ENCODE measurements at regions of chr11 and their contacts with region 1.

Region 1: DNA sequence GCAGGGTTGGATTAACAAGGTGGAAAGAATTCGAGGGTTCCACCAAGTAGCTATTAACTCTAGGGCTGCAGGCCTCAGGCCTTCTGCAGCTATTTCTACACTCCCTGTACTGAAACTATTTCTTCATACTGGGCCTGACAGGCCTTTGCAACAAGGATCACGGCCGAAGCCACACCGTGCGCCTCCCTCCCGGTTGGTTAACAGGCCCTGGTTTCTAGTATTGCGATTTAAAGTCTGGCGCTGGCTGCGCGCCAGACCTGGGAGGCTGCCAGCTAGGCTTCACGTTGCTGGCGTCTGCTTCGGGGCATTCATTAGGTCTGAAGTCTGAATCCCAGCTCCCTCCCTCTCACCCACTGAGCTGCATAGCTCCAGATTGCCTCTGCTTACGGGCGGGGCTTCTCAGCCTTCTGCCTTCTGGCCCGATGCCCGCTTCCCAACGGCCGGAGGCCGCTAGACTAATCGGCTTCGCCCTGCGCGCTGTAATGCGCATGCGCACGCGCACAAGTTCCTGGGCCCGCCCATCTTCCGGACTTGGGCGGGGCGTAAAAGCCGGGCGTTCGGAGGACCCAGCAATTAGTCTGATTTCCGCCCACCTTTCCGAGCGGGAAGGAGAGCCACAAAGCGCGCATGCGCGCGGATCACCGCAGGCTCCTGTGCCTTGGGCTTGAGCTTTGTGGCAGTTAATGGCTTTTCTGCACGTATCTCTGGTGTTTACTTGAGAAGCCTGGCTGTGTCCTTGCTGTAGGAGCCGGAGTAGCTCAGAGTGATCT is 1.6 kb downstream of the LDHA start:
- DNase-seq: peak; percentile 97
- ATAC-seq: peak; percentile 86
- H3K4me3 ChIP-seq: peak overlapping the region; percentile 91 to 100
- H3K27ac ChIP-seq: peak overlapping the region; percentile 98
- H3K4me1 ChIP-seq: peaks cover 11 to 25% of the 10 kb centered on the region in 2 experiments
- H3K27me3 ChIP-seq: no peaks in the 10 kb centered on the region
- CTCF ChIP-seq: no peak
- POLR2A ChIP-seq: peak; percentile 50
- RAD21 ChIP-seq: no peak

Region 2: DNA sequence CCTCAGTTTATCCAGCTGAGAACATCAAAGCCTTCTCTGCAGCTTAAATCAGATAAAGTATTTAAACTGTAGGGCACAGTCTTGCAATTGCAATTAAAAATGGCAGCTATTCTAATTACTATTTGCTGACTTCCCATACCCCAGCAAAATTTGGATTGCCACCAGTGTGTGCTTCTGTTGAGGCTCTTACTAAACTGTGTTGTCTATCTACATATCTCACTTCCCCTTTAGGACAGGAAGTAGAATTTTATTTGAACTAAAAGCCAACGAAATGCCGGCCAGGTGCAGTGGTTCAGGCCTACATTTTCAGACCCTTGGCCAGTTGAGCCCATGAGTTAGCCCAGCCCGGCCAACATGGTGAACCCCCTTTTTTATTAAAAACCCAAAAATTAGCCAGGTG is 166.4 kb before region 1 on chr11:
- CTCF ChIA-PET with region 1: no interaction called
- POLR2A ChIA-PET with region 1: no interaction called
- RAD21 ChIA-PET with region 1: no interaction called
- intact Hi-C with region 1: no loop called
- DNase-seq: no peak
- ATAC-seq: no peak
- H3K4me3 ChIP-seq: no peak overlapping the region
- H3K27ac ChIP-seq: no peak overlapping the region
- H3K4me1 ChIP-seq: no peaks in the 10 kb centered on the region
- H3K27me3 ChIP-seq: no peaks in the 10 kb centered on the region
- CTCF ChIP-seq: no peak
- POLR2A ChIP-seq: no peak
- RAD21 ChIP-seq: no peak

Region 3: GRCh38 chr11:18265949-18266348 is 130.0 kb before region 1 on chr11 and contains the start of gene SAA1:
- CTCF ChIA-PET with region 1: no interaction called
- POLR2A ChIA-PET with region 1: no interaction called
- RAD21 ChIA-PET with region 1: no interaction called
- intact Hi-C with region 1: no loop called
- DNase-seq: no peak
- ATAC-seq: no peak
- H3K4me3 ChIP-seq: no peak within 1 kb of the TSS
- H3K27ac ChIP-seq: no peak within 1 kb of the TSS
- H3K4me1 ChIP-seq: no peaks in the 10 kb centered on the region
- H3K27me3 ChIP-seq: no peaks in the 10 kb centered on the region
- CTCF ChIP-seq: no peak
- POLR2A ChIP-seq: no peak
- RAD21 ChIP-seq: no peak
- total RNA-seq, gene SAA1: 8.6 TPM

Region 4: DNA sequence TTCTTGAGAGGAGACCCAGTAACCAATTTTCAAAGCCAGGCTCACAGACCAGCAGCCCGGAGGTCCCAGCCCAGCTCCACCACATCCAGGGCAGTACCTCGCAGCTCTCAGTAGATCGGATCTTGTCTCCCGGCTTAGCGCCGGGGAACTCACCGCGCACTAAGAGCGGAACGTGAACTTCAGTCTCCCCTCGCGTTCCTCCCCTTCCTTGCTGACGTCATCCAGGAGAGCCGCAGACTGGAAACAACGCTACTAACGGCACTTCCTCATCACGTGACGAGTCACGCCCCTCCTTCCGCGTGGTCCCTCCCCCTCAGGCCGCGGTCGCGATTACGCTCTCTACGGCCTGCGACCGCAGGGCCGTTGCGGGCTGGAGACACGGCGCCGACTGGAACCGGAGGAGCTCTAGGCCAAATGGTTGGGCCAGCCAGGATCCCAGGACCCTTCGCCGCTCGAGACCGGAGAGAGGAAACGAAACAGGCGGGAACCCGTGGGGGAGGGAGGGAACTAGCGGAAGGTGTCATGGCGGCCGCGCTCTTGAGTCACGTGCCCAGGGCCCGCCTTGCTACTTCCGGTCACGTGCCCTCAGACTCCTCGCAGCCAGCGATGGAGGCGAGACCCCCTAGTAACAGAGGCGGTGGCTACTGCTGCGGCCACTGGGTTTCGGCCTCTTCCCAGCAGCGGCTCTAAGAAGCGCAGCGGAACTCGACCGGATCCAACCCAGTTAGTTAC is 73.8 kb before region 1 on chr11 and contains the starts of genes GTF2H1 and HPS5:
- CTCF ChIA-PET with region 1: no interaction called
- POLR2A ChIA-PET with region 1: interaction called, 12 read pairs
- RAD21 ChIA-PET with region 1: no interaction called
- intact Hi-C with region 1: loop called (anchors 2 kb)
- DNase-seq: peak; percentile 98
- ATAC-seq: peak; percentile 92
- H3K4me3 ChIP-seq: peak within 1 kb of the TSS; percentile 60 to 82
- H3K27ac ChIP-seq: peak within 1 kb of the TSS; percentile 69
- H3K4me1 ChIP-seq: peaks cover 9 to 21% of the 10 kb centered on the region in 2 experiments; a peak in 3 of 4 replicates
- H3K27me3 ChIP-seq: no peaks in the 10 kb centered on the region
- CTCF ChIP-seq: no peak
- POLR2A ChIP-seq: peak; percentile 90
- RAD21 ChIP-seq: peak; percentile 23; the same call in 1 of the 2 replicates
- total RNA-seq, gene GTF2H1: 37.3 TPM
- total RNA-seq, gene HPS5: 19.6 TPM

Region 5: GRCh38 chr11:18383388-18384156 is 12.3 kb before region 1 on chr11:
- CTCF ChIA-PET with region 1: interaction called, 4 read pairs
- POLR2A ChIA-PET with region 1: interaction called, 88 read pairs
- RAD21 ChIA-PET with region 1: interaction called in 1 of 2 experiments, 6 read pairs
- intact Hi-C with region 1: no loop called
- DNase-seq: peak; percentile 84
- ATAC-seq: peak; percentile 86
- H3K4me3 ChIP-seq: peak overlapping the region in 1 of 2 experiments; percentile 31; a peak in 2 of 4 replicates
- H3K27ac ChIP-seq: peak overlapping the region; percentile 94
- H3K4me1 ChIP-seq: peaks cover 23 to 24% of the 10 kb centered on the region in 2 experiments
- H3K27me3 ChIP-seq: no peaks in the 10 kb centered on the region
- CTCF ChIP-seq: no peak
- POLR2A ChIP-seq: no peak
- RAD21 ChIP-seq: no peak

Region 6: DNA sequence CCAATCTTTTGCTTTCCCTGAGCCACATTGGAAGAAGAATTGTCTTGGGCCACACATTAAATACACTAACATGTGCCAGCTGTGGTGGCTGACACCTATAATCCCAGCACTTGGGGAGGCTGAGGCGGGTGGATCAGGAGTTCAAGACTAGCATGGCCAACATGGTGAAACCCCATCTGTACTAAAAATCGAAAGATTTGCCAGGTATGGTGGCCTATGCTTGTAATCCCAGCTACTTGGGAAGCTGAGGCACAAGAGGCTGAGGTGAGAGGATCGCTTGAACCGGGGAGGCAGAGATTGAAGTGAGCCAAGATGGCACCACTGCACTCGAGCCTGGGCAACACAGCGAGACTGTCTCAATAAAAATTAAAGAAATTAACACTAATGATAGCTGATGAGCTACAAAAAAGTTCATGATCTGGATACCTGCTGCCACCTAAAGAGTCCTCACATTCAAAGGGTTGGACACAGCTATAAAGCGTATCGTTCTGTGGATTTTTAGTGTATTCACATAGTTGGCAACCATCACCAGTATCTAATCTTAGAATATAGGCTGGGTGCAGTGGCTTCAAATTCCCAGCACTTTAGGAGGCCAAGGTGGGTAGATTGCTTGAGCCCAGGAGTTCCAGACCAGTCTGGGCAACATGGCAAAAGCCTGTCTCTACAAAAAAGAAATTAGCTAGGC is 12.8 kb after region 1 on chr11:
- CTCF ChIA-PET with region 1: interaction called, 10 read pairs
- POLR2A ChIA-PET with region 1: interaction called, 37 read pairs
- RAD21 ChIA-PET with region 1: no interaction called
- intact Hi-C with region 1: no loop called
- DNase-seq: no peak
- ATAC-seq: no peak
- H3K4me3 ChIP-seq: no peak overlapping the region
- H3K27ac ChIP-seq: 0 out of 2 replicates have a peak overlapping the region, but pooled peaks have one; percentile 10
- H3K4me1 ChIP-seq: peaks cover 2 to 22% of the 10 kb centered on the region in 2 experiments; a peak in 2 of 4 replicates
- H3K27me3 ChIP-seq: no peaks in the 10 kb centered on the region
- CTCF ChIP-seq: no peak
- POLR2A ChIP-seq: no peak
- RAD21 ChIP-seq: no peak

Region 7: GRCh38 chr11:18526521-18527296 is 130.8 kb after region 1 on chr11 and contains the start of gene TSG101:
- CTCF ChIA-PET with region 1: no interaction called
- POLR2A ChIA-PET with region 1: interaction called, 16 read pairs
- RAD21 ChIA-PET with region 1: no interaction called
- intact Hi-C with region 1: loop called (anchors 5 kb)
- DNase-seq: peak; percentile 88
- ATAC-seq: peak; percentile 95
- H3K4me3 ChIP-seq: peak within 1 kb of the TSS; percentile 83 to 94
- H3K27ac ChIP-seq: peak within 1 kb of the TSS; percentile 64
- H3K4me1 ChIP-seq: peaks cover 6 to 23% of the 10 kb centered on the region in 2 experiments; a peak in 3 of 4 replicates
- H3K27me3 ChIP-seq: no peaks in the 10 kb centered on the region
- CTCF ChIP-seq: no peak
- POLR2A ChIP-seq: peak; percentile 72
- RAD21 ChIP-seq: no peak
- total RNA-seq, gene TSG101: 61.9 TPM